Cardiac septum (tissue), 1 donor: ENCODE measurements at regions of chr4 and their contacts with region 1.

Region 1: GRCh38 chr4:128809477-128810330 is at the start of gene JADE1:
- DNase-seq: peak; percentile 94
- total RNA-seq, gene JADE1: 23.0 TPM

Region 2: GRCh38 chr4:128427832-128428366 is 381.8 kb before region 1 on chr4:
- intact Hi-C with region 1: loop called (anchors 2 kb)
- DNase-seq: no peak

Region 3: DNA sequence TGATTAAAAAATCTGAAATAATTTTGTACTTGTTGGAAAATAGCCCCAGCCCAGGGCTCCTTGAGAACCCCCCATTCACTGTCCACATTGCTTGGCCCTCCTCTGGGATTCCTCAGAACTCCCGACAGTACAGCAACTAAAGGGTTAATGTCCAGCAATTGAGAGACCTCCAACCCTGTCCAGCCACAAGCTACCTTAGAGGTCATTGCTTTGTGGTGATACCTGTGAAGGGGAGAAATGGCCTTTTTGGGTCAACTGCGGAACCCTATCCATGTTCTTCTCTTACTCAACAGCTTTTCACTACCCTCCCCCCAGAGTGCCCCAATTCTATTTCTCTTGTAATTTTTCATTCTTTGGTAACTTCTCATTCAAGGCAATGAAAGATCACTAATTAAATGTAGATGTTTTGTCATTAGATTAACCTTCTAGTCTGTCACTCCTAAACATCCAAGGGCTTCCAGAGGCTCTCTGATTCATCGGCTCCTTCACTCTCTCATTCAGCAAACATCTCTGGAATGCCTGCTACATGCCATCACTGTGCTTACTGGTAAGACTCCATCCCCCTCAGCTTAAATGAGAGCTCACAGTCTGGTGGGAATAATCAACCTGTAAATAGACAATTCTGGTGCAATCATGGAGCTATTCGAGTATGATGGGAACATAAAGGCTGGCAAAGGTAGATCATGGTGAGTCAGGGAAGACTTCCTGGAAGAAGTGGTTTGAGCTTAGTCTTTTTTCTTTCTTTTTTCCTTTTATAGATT is 280.7 kb before region 1 on chr4:
- intact Hi-C with region 1: loop called (anchors 2 kb)
- DNase-seq: no peak

Region 4: DNA sequence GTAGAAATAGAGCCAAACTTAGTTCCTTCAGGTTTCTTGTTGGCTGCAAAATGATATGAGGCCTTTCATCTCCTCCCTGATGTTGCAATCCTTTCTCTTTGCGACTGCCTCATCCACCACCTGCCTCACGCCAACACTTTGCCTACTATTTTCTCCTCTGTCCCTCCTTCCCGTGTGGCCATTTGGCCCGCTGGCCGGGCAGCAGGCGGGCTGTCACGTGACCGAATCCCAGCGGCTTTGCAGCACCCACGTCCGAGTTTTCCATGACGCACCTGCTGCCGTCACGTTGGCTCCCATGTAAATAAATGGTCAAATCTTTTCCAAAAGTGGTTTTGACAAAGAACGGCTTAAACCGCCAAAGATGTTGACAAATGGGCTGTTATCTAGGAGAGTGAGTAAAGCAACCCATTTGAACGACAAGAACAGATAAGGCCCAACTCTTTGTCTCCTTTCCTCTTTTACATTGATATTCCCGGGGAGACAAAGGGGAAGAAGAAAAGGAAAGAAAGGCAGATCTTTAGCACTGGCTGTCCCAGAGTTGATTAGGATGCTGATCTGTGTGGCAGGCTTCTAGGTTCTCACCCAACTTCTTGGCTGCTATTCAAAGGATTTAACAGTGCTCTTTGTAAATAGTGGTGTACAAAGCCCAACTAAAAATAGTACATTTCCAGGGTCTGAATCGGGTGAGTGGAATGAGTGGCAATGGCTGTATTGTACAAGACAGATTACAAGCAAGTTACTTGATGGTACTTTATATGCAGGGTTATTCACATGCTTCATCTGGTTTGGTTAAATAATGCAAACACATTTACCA is 174.4 kb before region 1 on chr4:
- intact Hi-C with region 1: loop called (anchors 2 kb)
- DNase-seq: peak; percentile 88

Region 5: GRCh38 chr4:128863312-128864075 is 53.8 kb after region 1 on chr4:
- intact Hi-C with region 1: loop called (anchors 2 kb)
- DNase-seq: peak; percentile 89

Region 6: GRCh38 chr4:129446074-129446473 is 636.4 kb after region 1 on chr4:
- intact Hi-C with region 1: no loop called
- DNase-seq: no peak